GM12878 (cell line): ENCODE measurements at regions of chr19 and their contacts with region 1.

Region 1: GRCh38 chr19:12965017-12965811 is 4.2 kb upstream of the DAND5 start:
- DNase-seq: peak; percentile 39
- ATAC-seq: peak; percentile 99
- H3K4me3 ChIP-seq: peak overlapping the region; percentile 64; the same call in 1 of the 2 replicates
- H3K27ac ChIP-seq: peak overlapping the region; percentile 2; the same call in 1 of the 2 replicates
- H3K4me1 ChIP-seq: 0 out of 2 replicates have a peak, but pooled peaks cover 3% of the 10 kb centered on the region
- H3K27me3 ChIP-seq: no peaks in the 10 kb centered on the region
- CTCF ChIP-seq: peak; percentile 81 to 99 (median 97)
- EP300 ChIP-seq: no peak
- POLR2A ChIP-seq: peak; percentile 29; the same call in 1 of the 2 replicates
- RAD21 ChIP-seq: peak; percentile 68

Region 2: DNA sequence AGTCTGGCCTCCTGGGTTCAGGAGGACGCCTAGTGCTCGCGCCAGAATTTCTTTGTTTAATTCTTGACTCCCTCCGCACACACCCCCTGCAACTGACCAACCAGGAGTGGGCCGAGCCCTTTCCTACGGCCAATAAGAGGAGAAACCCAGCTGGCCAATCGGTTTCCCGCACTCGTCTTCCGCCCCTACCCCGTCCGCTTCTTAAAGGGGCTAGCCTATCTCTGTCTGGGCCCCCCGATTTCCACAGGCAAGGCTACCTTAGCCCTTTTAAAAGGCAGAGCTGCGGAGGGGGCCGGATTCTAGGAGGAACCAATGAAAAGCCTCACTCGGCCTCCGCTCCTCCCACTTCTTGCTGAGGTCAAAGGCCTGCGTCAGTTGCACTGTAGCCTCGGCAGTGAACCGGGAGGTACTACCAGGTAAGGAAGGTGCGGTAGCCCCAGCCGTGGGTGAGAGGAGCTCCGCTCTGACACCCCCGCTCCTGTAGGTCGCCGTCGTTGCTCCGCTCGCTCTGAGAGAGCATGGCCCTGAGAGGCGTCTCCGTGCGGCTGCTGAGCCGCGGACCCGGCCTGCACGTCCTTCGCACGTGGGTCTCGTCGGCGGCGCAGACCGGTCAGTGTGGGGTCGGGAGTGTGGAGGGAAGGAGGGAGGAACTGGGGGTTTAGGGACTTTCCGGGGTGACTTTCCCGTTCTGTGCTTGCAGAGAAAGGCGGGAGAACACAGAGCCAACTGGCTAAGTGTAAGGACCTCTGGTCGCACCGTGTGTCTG is 74.2 kb before region 1 on chr19 and contains the start of gene GCDH:
- CTCF ChIA-PET with region 1: interaction called, 182 read pairs
- POLR2A ChIA-PET with region 1: interaction called, 11 read pairs
- RAD21 ChIA-PET with region 1: interaction called, 31 read pairs
- SMC1A ChIA-PET with region 1: interaction called, 29 read pairs
- in situ Hi-C with region 1: no loop called
- intact Hi-C with region 1: no loop called
- DNase-seq: peak; percentile 95
- ATAC-seq: peak; percentile 97
- H3K4me3 ChIP-seq: peak within 1 kb of the TSS; percentile 89
- H3K27ac ChIP-seq: peak within 1 kb of the TSS; percentile 52
- H3K4me1 ChIP-seq: peaks cover 7% of the 10 kb centered on the region
- H3K27me3 ChIP-seq: no peaks in the 10 kb centered on the region
- CTCF ChIP-seq: no peak
- EP300 ChIP-seq: no peak
- POLR2A ChIP-seq: peak; percentile 91
- RAD21 ChIP-seq: no peak
- polyA plus RNA-seq, gene GCDH: 4.2 to 14.6 TPM

Region 3: GRCh38 chr19:12918271-12918670 is 46.9 kb before region 1 on chr19:
- CTCF ChIA-PET with region 1: interaction called, 11 read pairs
- POLR2A ChIA-PET with region 1: interaction called, 6 read pairs
- RAD21 ChIA-PET with region 1: interaction called, 3 read pairs
- SMC1A ChIA-PET with region 1: interaction called, 5 read pairs
- in situ Hi-C with region 1: no loop called
- intact Hi-C with region 1: no loop called
- DNase-seq: no peak
- ATAC-seq: no peak
- H3K4me3 ChIP-seq: no peak overlapping the region
- H3K27ac ChIP-seq: no peak overlapping the region
- H3K4me1 ChIP-seq: peaks cover 10% of the 10 kb centered on the region
- H3K27me3 ChIP-seq: no peaks in the 10 kb centered on the region
- CTCF ChIP-seq: no peak
- EP300 ChIP-seq: no peak
- POLR2A ChIP-seq: no peak; the same call in 1 of the 2 replicates
- RAD21 ChIP-seq: no peak

Region 4: DNA sequence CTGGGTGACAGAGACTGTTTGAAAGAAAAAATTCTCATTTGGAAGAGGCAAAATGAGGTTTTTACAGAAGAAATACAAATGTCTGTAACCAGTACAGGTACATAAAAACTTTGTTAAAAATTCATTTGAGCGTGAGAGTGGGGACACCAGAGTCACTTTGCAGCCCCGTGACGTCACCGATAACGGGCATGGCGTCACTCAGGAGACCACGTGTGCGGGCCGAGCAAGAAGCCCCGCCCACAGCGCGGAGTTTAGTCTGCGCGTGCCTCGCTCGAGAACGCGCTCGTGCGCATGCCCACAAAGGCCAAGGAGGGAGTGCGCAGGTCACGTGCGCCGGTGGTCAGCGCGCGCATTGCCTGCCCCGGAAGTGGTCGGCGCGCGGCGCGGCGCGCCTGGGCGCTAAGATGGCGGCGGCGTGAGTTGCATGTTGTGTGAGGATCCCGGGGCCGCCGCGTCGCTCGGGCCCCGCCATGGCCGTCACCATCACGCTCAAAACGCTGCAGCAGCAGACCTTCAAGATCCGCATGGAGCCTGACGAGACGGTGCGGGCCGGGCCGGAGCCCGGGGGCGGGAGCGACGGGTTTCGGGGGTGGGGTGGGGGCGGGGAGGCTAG is 19.6 kb before region 1 on chr19 and contains the start of gene RAD23A:
- CTCF ChIA-PET with region 1: interaction called, 11 read pairs
- POLR2A ChIA-PET with region 1: no interaction called
- RAD21 ChIA-PET with region 1: no interaction called
- SMC1A ChIA-PET with region 1: no interaction called
- in situ Hi-C with region 1: no loop called
- intact Hi-C with region 1: no loop called
- DNase-seq: peak; percentile 94
- ATAC-seq: peak; percentile 87
- H3K4me3 ChIP-seq: peak within 1 kb of the TSS; percentile 82
- H3K27ac ChIP-seq: peak within 1 kb of the TSS; percentile 85
- H3K4me1 ChIP-seq: peaks cover 42% of the 10 kb centered on the region
- H3K27me3 ChIP-seq: no peaks in the 10 kb centered on the region
- CTCF ChIP-seq: no peak
- EP300 ChIP-seq: peak; percentile 30 to 47; a peak in 2 of 4 replicates
- POLR2A ChIP-seq: peak; percentile 97
- RAD21 ChIP-seq: no peak
- polyA plus RNA-seq, gene RAD23A: 8.8 to 33.5 TPM

Region 5: DNA sequence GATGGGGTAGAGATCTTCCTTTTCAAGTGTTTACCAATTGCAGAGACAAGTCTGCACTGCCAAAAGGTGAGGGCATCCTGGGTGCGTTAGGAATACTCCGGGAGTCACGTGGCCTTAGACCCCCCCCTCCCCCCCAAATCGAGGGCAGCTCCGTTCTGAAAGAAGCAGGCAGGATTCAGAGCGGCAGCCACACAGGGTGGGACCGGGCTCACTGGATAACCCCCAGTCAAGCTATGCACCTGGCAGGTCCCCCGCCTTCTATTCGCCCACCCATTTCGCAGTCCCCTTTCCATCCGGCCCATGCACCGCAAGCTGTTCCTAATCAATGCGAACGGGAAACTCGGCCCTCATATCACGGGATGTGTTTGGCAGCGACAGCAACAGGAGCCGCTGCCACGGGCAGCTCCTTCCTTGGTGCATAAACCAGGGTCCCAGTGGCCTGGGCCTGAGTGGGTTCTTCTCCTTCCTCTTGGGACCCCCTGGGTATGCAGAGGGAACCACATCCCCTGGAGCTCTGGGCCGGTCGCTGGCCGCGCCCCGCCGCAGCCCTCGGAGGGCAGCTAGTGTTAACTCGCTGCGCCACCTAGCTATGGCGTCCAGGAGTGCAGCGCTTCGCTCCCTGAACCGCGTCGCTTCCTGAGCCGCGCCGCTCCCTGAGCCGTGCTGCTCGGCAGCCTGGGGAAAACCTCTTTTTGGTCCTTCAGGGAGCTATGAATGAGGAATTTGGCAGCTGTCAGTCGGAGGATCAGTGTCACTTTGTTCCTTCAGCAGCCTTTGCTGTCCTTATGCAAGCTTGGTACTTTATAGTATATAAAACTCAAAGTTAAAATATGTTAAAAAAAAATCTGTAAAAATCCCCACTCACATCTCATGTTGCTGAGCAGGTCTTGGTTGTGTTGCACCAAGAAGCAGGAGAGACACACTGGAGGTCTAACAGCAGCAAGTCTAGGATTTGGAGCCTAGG is 96.0 kb after region 1 on chr19:
- CTCF ChIA-PET with region 1: interaction called, 58 read pairs
- POLR2A ChIA-PET with region 1: no interaction called
- RAD21 ChIA-PET with region 1: interaction called, 23 read pairs
- SMC1A ChIA-PET with region 1: interaction called, 10 read pairs
- in situ Hi-C with region 1: no loop called
- intact Hi-C with region 1: no loop called
- DNase-seq: peak; percentile 11
- ATAC-seq: peak; percentile 99
- H3K4me3 ChIP-seq: peak overlapping the region; percentile 34; the same call in 1 of the 2 replicates
- H3K27ac ChIP-seq: no peak overlapping the region
- H3K4me1 ChIP-seq: no peaks in the 10 kb centered on the region
- H3K27me3 ChIP-seq: peaks cover 9 to 11% of the 10 kb centered on the region in 2 experiments
- CTCF ChIP-seq: peak; percentile 94 to 97 (median 96); a peak in 5 of 6 replicates
- EP300 ChIP-seq: no peak
- POLR2A ChIP-seq: no peak
- RAD21 ChIP-seq: peak; percentile 80

Region 6: GRCh38 chr19:13104360-13104847 is 139.2 kb after region 1 on chr19:
- CTCF ChIA-PET with region 1: interaction called, 13 read pairs
- POLR2A ChIA-PET with region 1: no interaction called
- RAD21 ChIA-PET with region 1: interaction called, 3 read pairs
- SMC1A ChIA-PET with region 1: no interaction called
- in situ Hi-C with region 1: no loop called
- intact Hi-C with region 1: no loop called
- DNase-seq: no peak
- ATAC-seq: peak; percentile 45
- H3K4me3 ChIP-seq: peak overlapping the region; percentile 61
- H3K27ac ChIP-seq: peak overlapping the region; percentile 90
- H3K4me1 ChIP-seq: peaks cover 41% of the 10 kb centered on the region
- H3K27me3 ChIP-seq: no peaks in the 10 kb centered on the region
- CTCF ChIP-seq: peak; percentile 79 to 99 (median 96)
- EP300 ChIP-seq: no peak
- POLR2A ChIP-seq: peak; percentile 72
- RAD21 ChIP-seq: peak; percentile 45; the same call in 1 of the 2 replicates